ENCODE measurements at regions of chr3 and their contacts with region 1.

Region 1: GRCh38 chr3:43894176-43895049 is 203.7 kb downstream of the ABHD5 start:
- DNase-seq: peak; percentile 74
- ATAC-seq: peak; percentile 84
- H3K4me3 Mint-ChIP-seq: peak overlapping the region; percentile 63
- H3K27ac Mint-ChIP-seq: no peak overlapping the region
- H3K4me1 Mint-ChIP-seq: peaks cover 8% of the 10 kb centered on the region
- H3K27me3 Mint-ChIP-seq: peaks cover 42% of the 10 kb centered on the region

Region 2: DNA sequence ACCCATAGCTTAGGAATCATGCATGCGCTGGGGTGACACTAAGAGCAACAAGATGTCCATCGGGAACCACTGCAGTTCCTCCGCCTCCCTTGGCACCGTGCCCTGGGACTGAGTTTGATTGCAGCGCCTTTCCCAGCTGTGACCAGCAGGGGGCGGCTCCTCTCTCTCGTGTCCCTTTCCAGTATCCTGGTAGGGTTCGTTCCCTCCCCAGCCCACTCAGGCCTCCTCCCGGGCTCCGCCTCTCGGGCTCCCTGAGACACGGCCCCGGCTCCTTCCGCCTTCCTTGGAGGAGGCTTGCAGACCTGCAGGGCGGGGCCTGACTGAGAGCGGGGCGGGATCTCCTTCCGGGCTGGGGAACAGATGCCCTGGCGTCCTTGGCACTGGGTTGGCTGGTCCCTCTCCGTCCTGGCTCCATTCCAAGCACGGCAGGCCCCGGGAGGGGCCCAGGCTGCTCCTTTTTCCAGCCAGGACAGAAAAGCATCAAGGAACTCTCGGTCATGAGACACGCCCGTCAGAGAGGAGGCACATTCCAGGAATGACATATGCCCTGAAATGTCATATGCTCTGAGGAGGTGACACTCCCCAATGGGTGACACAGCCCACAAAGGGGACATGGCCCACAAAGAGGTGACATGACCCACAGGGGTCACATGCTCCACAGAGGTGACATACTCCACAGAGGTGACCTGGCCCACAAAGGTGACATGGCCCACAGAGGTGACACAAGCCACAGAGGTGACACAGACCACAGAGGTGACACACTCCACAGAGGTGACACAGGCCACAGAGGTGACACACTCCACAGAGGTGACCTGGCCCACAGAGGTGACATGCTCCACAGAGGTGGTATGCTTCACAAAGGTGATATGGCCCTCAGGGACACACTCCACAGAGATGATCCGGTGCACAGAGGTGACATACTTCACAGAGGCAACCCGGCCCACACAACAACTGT is 124.7 kb before region 1 on chr3:
- CTCF ChIA-PET with region 1: interaction called, 3 read pairs
- POLR2A ChIA-PET with region 1: no interaction called
- intact Hi-C with region 1: loop called in 1 of 2 experiments (anchors 5 kb)
- DNase-seq: peak; percentile 90
- ATAC-seq: peak; percentile 51
- H3K4me3 Mint-ChIP-seq: no peak overlapping the region
- H3K27ac Mint-ChIP-seq: no peak overlapping the region
- H3K4me1 Mint-ChIP-seq: peaks cover 25% of the 10 kb centered on the region
- H3K27me3 Mint-ChIP-seq: no peaks in the 10 kb centered on the region

Region 3: DNA sequence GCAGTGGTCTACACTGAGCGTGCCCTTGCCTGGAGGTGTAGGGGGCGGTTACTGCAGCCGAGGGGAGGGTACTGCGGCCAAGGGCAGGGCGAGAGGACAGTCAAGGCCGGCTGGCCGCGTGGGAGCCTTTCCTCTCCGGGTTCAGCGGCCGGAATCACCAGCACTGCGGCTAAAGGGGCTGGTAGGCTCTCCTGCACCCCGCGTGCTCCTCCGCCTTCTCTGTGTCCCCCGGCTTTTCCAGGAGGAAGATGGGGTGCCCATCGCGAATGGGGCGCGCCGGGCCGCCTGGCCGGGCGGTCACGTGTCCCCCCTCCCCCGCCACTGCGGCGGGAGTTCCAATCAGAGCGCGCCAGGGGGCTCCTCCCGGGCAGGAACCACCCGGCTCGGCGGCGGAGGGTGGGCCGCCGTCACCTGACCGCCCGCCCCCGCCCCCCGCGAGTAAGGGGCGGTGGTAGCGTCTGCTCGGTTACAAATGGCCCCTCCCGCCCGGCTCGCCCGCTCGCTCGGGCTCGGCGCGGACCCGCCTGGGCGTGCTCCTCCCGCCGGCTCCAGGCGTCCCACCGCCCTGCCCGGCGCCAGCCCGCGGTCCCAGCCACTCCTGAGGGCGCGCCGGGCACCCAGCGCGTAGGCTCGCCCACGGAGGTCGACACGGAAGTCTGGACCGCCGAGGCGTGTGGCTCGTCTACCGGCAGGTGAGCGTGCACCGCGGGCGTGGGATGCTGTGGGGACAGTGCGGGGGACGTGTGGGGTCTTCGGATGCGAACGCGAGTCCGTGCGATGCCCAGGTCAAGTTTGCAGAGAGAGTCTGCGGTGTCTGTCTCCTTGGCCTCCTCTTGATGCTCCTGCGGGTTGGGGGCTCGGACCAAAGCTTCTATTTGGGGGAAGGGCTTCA is 104.7 kb after region 1 on chr3:
- CTCF ChIA-PET with region 1: no interaction called
- POLR2A ChIA-PET with region 1: no interaction called
- intact Hi-C with region 1: loop called (anchors 2 to 5 kb)
- DNase-seq: no peak
- ATAC-seq: no peak
- H3K4me3 Mint-ChIP-seq: peak overlapping the region; percentile 58
- H3K27ac Mint-ChIP-seq: no peak overlapping the region
- H3K4me1 Mint-ChIP-seq: peaks cover 39% of the 10 kb centered on the region
- H3K27me3 Mint-ChIP-seq: peaks cover 68% of the 10 kb centered on the region

Measured in activated CD4-positive, alpha-beta T cell treated with anti-CD3 and anti-CD28 coated beads for 36 hours (primary cell).